ENCODE measurements at regions of chr11 and their contacts with region 1.

Region 1: DNA sequence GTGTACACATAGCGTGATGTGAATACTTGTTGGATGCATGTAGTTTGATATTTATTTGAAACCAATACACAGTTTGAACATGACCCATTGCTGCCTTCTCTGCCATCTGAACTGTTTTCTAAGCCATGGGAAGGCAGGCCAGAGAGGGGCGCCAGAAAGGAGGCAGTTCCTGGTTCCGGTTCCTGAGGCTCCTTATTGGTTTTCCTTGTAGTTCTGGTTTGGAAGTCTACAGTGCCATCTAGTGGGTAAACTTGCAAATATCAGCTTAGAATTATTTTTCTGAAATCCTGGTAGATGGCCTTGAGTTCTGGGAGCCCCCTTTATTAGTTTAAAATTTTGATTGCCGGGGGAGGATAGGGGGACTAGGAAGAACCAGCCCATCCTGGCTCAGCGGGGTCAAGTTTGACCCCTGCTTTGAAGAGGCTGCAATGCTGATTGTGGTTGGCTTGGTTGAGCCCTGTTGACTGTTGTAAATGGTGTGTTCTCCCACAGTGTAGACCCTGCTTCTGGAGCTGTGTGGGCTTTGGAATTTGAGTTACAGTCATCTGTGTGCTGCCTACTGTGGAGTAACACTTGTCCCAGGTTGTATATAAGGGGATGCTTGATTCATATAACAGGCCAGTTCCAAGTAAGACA is 48.4 kb downstream of the GRAMD1B start:
- DNase-seq: peak; percentile 60
- ATAC-seq: peak; percentile 33
- H3K4me3 ChIP-seq: peak overlapping the region; percentile 54
- H3K27ac ChIP-seq: peak overlapping the region; percentile 36; the same call in 1 of the 2 replicates
- H3K4me1 ChIP-seq: peaks cover 53% of the 10 kb centered on the region
- H3K27me3 ChIP-seq: no peaks in the 10 kb centered on the region
- CTCF ChIP-seq: peak; percentile 61 to 77 (median 68)
- EP300 ChIP-seq: no peak
- POLR2A ChIP-seq: no peak
- RAD21 ChIP-seq: peak; percentile 92

Region 2: GRCh38 chr11:123261345-123262106 is 216.9 kb before region 1 on chr11:
- CTCF ChIA-PET with region 1: interaction called, 25 read pairs
- POLR2A ChIA-PET with region 1: no interaction called
- RAD21 ChIA-PET with region 1: interaction called, 6 read pairs
- SMC1A ChIA-PET with region 1: interaction called, 10 read pairs
- in situ Hi-C with region 1: no loop called
- intact Hi-C with region 1: loop called (anchors 2 kb)
- DNase-seq: no peak
- ATAC-seq: peak; percentile 74
- H3K4me3 ChIP-seq: no peak overlapping the region
- H3K27ac ChIP-seq: no peak overlapping the region
- H3K4me1 ChIP-seq: peaks cover 28% of the 10 kb centered on the region
- H3K27me3 ChIP-seq: no peaks in the 10 kb centered on the region
- CTCF ChIP-seq: peak; percentile 69 to 95 (median 85)
- EP300 ChIP-seq: no peak
- POLR2A ChIP-seq: no peak
- RAD21 ChIP-seq: peak; percentile 46

Region 3: DNA sequence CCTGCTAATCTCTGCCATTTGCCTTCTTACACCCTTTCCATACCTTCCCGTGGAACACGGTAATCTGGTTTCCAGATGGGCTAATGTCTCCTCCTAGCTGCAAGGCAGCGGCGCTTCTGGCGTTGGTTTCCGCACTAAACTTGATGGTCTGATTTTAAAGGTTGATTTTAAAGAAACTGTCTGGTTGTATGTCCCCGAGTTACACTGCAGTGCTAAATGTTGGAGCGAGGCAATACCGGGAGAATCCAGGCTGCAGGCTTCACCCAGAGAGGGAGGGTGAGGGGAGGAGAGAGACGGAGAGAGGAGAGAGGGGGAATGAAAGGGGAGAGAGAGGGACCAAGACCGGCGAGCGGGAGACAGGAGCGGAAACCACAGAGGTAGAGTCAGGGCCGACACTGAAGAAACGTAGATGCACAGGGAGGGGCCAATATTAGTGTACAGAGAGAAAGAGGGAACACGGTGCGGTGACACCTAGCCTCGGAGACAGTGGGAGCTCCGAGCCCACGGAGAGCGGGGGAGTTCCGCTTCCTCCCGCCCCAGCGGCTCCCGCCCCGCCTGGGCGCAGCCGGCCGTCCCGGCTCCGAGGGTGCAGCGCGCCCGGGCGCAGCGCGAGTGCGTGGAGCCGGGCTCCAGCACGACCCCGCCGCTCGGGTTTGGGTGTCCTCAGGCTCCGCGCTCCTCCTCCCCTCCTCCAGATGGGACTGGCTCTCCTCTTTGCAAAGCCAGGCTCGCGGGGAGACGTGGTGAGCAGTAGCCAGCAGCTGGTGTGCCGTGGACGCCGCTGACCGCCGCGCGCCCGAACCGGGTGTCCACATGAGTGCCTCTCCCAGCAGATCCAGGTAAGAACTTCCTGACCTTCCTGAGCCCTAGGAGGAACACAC is 120.3 kb before region 1 on chr11:
- CTCF ChIA-PET with region 1: interaction called, 16 read pairs
- POLR2A ChIA-PET with region 1: no interaction called
- RAD21 ChIA-PET with region 1: interaction called, 9 read pairs
- SMC1A ChIA-PET with region 1: interaction called, 8 read pairs
- in situ Hi-C with region 1: no loop called
- intact Hi-C with region 1: loop called (anchors 5 kb)
- DNase-seq: peak; percentile 34
- ATAC-seq: peak; percentile 80
- H3K4me3 ChIP-seq: peak overlapping the region; percentile 91
- H3K27ac ChIP-seq: peak overlapping the region; percentile 27; the same call in 1 of the 2 replicates
- H3K4me1 ChIP-seq: peaks cover 7% of the 10 kb centered on the region; the same call in 1 of the 2 replicates
- H3K27me3 ChIP-seq: no peaks in the 10 kb centered on the region
- CTCF ChIP-seq: peak; percentile 20 to 43 (median 27); a peak in 4 of 6 replicates
- EP300 ChIP-seq: no peak
- POLR2A ChIP-seq: peak; percentile 76
- RAD21 ChIP-seq: peak; percentile 56

Region 4: GRCh38 chr11:123461164-123461563 is 17.3 kb before region 1 on chr11:
- CTCF ChIA-PET with region 1: interaction called, 14 read pairs
- POLR2A ChIA-PET with region 1: interaction called, 4 read pairs
- RAD21 ChIA-PET with region 1: interaction called, 4 read pairs
- SMC1A ChIA-PET with region 1: interaction called, 11 read pairs
- in situ Hi-C with region 1: no loop called
- intact Hi-C with region 1: loop called (anchors 2 kb)
- DNase-seq: no peak
- ATAC-seq: no peak
- H3K4me3 ChIP-seq: no peak overlapping the region
- H3K27ac ChIP-seq: no peak overlapping the region
- H3K4me1 ChIP-seq: peaks cover 8% of the 10 kb centered on the region; the same call in 1 of the 2 replicates
- H3K27me3 ChIP-seq: no peaks in the 10 kb centered on the region
- CTCF ChIP-seq: no peak
- EP300 ChIP-seq: no peak
- POLR2A ChIP-seq: no peak
- RAD21 ChIP-seq: no peak

Region 5: DNA sequence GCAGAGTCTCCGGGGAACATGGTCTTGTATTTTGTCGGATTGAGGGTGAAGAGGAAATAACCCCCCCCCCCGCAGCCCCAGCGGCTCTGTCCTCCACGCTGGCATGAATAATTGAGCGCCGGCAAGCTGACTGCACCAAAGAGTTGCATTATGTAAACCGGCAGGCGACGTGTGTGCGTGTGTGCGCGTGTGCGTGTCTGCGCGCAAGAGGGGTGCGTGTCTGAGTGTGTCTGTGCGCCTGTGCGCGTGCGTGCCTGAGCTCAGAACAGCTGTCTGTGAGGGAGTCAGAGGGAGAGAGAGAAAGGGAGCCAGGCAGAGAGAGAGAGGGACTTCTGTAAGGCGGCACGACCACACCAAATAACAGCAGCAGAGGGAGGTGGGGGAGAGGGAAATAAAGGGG is 81.5 kb after region 1 on chr11:
- CTCF ChIA-PET with region 1: interaction called, 6 read pairs
- POLR2A ChIA-PET with region 1: no interaction called
- RAD21 ChIA-PET with region 1: interaction called, 5 read pairs
- SMC1A ChIA-PET with region 1: interaction called, 3 read pairs
- in situ Hi-C with region 1: no loop called
- intact Hi-C with region 1: loop called (anchors 2 kb)
- DNase-seq: no peak
- ATAC-seq: peak; percentile 73
- H3K4me3 ChIP-seq: peak overlapping the region; percentile 15; the same call in 1 of the 2 replicates
- H3K27ac ChIP-seq: no peak overlapping the region
- H3K4me1 ChIP-seq: peaks cover 14% of the 10 kb centered on the region
- H3K27me3 ChIP-seq: no peaks in the 10 kb centered on the region
- CTCF ChIP-seq: no peak
- EP300 ChIP-seq: no peak
- POLR2A ChIP-seq: peak; percentile 44; the same call in 1 of the 2 replicates
- RAD21 ChIP-seq: no peak

Region 6: DNA sequence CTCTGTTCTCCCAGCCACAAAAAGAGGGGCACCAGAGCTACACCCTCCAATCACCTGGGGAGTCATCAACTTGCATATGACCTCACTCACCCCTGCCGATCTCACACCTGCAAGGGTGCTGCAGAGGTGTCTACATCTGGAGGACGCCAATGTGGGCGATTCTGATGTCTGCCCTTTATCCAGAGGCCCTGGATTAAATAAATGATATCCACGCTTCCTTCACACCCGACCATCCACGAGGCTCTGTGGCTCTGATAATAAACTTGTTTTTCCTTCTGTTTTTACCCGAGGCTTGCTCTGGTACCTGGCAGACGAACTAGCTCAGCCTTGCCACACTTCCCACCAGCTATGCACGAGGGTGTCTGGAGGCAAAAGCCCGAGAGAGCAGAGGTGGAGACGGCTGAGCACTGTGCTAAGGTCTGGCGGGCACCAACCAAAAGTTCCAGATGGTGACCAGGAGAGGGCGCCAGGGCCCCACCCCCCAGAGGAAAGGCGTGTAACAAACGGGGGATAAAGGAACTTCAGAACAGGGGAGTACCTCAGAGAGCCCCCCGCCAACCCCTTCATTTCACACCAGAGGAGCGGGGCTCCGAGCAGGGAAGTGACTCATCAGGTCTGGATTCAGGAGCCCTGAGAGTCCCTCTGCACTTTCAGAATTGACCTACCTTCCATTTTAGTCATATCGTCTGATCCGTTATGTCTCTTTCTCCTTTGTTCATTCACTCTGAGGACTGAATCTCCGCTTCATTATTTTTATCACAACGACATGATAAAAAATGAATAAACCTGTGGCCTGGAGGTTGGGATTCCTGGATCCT is 162.4 kb after region 1 on chr11:
- CTCF ChIA-PET with region 1: no interaction called
- POLR2A ChIA-PET with region 1: no interaction called
- RAD21 ChIA-PET with region 1: no interaction called
- SMC1A ChIA-PET with region 1: no interaction called
- in situ Hi-C with region 1: no loop called
- intact Hi-C with region 1: no loop called
- DNase-seq: no peak
- ATAC-seq: peak; percentile 97
- H3K4me3 ChIP-seq: no peak overlapping the region
- H3K27ac ChIP-seq: no peak overlapping the region
- H3K4me1 ChIP-seq: no peaks in the 10 kb centered on the region
- H3K27me3 ChIP-seq: peaks cover 0 to 2% of the 10 kb centered on the region in 2 experiments; a peak in 2 of 4 replicates
- CTCF ChIP-seq: peak; percentile 77 to 82 (median 80)
- EP300 ChIP-seq: no peak
- POLR2A ChIP-seq: no peak
- RAD21 ChIP-seq: peak; percentile 90